Dorsolateral prefrontal cortex (tissue), 120 donors: ENCODE measurements at regions of chr13 and their contacts with region 1.

Region 1: DNA sequence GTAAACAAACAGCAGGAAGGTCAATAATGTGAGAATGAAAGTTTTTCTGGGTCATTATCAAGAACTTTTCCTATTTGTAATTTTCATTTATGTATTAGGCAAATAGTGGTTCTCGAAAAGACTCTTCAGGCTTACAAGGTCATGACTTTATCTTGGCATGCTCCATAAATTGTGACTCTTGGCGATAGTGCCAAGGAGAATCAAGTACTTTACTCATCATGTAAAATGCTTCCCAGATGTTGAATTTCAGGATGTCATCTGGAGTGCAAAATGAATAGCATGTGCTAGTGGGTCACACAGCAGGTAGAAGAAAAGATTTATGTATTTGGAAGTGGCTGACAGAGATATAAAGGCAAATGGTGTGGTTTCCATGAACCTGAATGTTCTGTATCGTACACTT is 1492.7 kb upstream of the PCDH20 start:
- DNase-seq: no peak
- H3K4me3 ChIP-seq: no peak overlapping the region
- H3K27ac ChIP-seq: no peak overlapping the region
- H3K27me3 ChIP-seq: no peaks in the 10 kb centered on the region
- CTCF ChIP-seq: no peak

Region 2: GRCh38 chr13:62702502-62702901 is 205.8 kb before region 1 on chr13:
- intact Hi-C with region 1: no loop called
- DNase-seq: no peak
- H3K4me3 ChIP-seq: no peak overlapping the region
- H3K27ac ChIP-seq: no peak overlapping the region
- H3K27me3 ChIP-seq: no peaks in the 10 kb centered on the region
- CTCF ChIP-seq: no peak

Region 3: GRCh38 chr13:63299866-63300394 is 391.6 kb after region 1 on chr13:
- intact Hi-C with region 1: no loop called
- DNase-seq: no peak
- H3K4me3 ChIP-seq: no peak overlapping the region
- H3K27ac ChIP-seq: no peak overlapping the region
- H3K27me3 ChIP-seq: peaks cover 0 to 12% (median 0%) of the 10 kb centered on the region in 45 donors
- CTCF ChIP-seq: no peak

Region 4: DNA sequence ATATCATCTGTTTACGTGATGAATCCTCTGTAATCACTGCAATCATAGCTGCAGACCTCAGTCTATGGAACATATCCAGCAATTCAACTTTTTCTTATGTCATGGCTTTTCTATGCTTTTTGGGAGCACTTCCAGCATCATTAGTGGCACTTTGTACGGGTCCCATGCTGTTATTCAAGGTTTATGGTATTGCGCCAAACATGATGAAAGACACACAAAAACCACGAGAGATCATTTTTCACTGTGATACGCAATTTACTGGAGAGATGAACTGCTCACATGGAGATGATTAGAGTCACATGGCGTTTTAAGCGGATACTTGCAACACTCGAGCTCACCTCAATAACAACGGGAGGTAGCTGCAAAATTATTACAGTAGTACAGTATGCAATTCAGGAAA is 609.0 kb after region 1 on chr13:
- intact Hi-C with region 1: loop called in 1 of 2 experiments (anchors 10 kb)
- DNase-seq: no peak
- H3K4me3 ChIP-seq: no peak overlapping the region
- H3K27ac ChIP-seq: no peak overlapping the region
- H3K27me3 ChIP-seq: no peaks in the 10 kb centered on the region
- CTCF ChIP-seq: no peak